ENCODE measurements at regions of chr1 and their contacts with region 1.

Region 1: GRCh38 chr1:155834296-155834926 is 22.6 kb downstream of the GON4L start:
- DNase-seq: peak in 1 of 9 donors; percentile 11
- ATAC-seq: no peak
- H3K4me3 ChIP-seq: no peak overlapping the region
- H3K4me3 Mint-ChIP-seq: no peak overlapping the region
- H3K27ac ChIP-seq: no peak overlapping the region
- H3K27ac Mint-ChIP-seq: peak overlapping the region in 7 of 9 donors; percentile 25 to 84 (median 67)
- H3K4me1 ChIP-seq: no peaks in the 10 kb centered on the region
- H3K4me1 Mint-ChIP-seq: peaks cover 26 to 40% (median 35%) of the 10 kb centered on the region in 7 donors
- H3K27me3 ChIP-seq: no peaks in the 10 kb centered on the region
- H3K27me3 Mint-ChIP-seq: no peaks in the 10 kb centered on the region

Region 2: GRCh38 chr1:155424091-155424490 is 410.3 kb before region 1 on chr1:
- CTCF ChIA-PET with region 1: no interaction called
- POLR2A ChIA-PET with region 1: no interaction called
- intact Hi-C with region 1: no loop called
- DNase-seq: no peak
- ATAC-seq: no peak
- H3K4me3 ChIP-seq: no peak overlapping the region
- H3K4me3 Mint-ChIP-seq: no peak overlapping the region
- H3K27ac ChIP-seq: no peak overlapping the region
- H3K27ac Mint-ChIP-seq: peak overlapping the region in 1 of 9 donors; percentile 36
- H3K4me1 ChIP-seq: no peaks in the 10 kb centered on the region
- H3K4me1 Mint-ChIP-seq: peaks cover 0 to 7% (median 5%) of the 10 kb centered on the region in 7 donors
- H3K27me3 ChIP-seq: no peaks in the 10 kb centered on the region
- H3K27me3 Mint-ChIP-seq: no peaks in the 10 kb centered on the region

Region 3: DNA sequence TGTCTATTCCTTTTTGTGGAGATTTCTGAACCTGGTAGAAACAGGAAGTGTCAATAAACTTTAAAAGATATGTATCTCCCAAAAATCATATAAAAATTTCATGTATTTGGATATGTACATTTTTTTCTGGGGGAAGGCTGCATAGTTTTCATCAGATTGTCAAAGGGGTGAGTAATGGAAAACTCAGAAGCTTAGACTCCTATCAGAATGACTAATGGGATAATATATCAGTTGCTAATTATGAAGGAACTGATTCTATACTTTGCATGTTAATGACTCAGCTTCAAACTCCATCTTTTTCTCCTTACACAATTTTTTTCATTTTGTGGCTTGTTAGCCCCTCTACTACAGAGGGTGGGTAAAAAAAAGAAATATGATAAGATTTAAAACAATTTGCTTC is 33.3 kb before region 1 on chr1:
- CTCF ChIA-PET with region 1: no interaction called
- POLR2A ChIA-PET with region 1: no interaction called
- intact Hi-C with region 1: no loop called
- DNase-seq: no peak
- ATAC-seq: no peak
- H3K4me3 ChIP-seq: no peak overlapping the region
- H3K4me3 Mint-ChIP-seq: no peak overlapping the region
- H3K27ac ChIP-seq: no peak overlapping the region
- H3K27ac Mint-ChIP-seq: peak overlapping the region in 1 of 9 donors; percentile 38
- H3K4me1 ChIP-seq: no peaks in the 10 kb centered on the region
- H3K4me1 Mint-ChIP-seq: peaks cover 0 to 3% (median 0%) of the 10 kb centered on the region in 7 donors
- H3K27me3 ChIP-seq: no peaks in the 10 kb centered on the region
- H3K27me3 Mint-ChIP-seq: no peaks in the 10 kb centered on the region

Region 4: DNA sequence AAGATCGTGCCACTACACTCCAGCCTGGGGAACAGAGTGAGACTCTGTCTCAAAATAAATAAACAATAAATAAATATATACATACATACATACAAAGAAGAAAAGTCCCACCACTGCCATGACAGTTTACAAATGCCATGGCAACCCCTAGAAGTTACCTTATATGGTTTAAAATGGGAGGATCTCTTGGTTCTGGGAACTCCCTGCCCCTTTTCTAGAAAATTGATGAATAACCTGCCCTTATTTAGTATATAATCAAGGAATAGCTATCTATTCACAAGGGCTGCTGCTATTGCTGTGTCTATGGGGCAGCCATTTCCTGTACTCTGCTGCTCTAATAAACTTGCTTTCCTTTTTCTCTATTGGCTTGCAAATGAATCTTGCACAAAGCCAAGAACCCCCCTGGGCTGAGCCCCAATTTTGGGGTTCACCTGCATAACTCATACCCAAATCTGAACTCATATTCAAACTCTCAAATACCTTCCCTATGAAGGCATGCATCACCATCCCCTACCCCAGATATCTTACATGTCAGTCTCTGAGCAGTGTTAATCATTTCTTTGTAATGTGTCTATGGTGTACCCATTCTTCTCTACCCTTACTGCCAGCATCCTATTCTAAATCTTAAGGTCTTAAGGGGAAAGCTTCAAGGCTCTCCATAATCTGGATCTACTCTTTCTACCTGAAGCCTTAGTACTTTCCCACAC is 13.6 kb after region 1 on chr1:
- CTCF ChIA-PET with region 1: interaction called, 3 read pairs
- POLR2A ChIA-PET with region 1: interaction called, 3 read pairs
- intact Hi-C with region 1: loop called in 1 of 2 experiments (anchors 1 kb)
- DNase-seq: no peak
- ATAC-seq: no peak
- H3K4me3 ChIP-seq: no peak overlapping the region
- H3K4me3 Mint-ChIP-seq: peak overlapping the region; percentile 6 to 66 (median 41)
- H3K27ac ChIP-seq: no peak overlapping the region
- H3K27ac Mint-ChIP-seq: peak overlapping the region in 8 of 9 donors; percentile 0 to 85 (median 48)
- H3K4me1 ChIP-seq: peaks cover 14 to 18% of the 10 kb centered on the region in 2 donors
- H3K4me1 Mint-ChIP-seq: peaks cover 44 to 79% (median 61%) of the 10 kb centered on the region in 7 donors
- H3K27me3 ChIP-seq: no peaks in the 10 kb centered on the region
- H3K27me3 Mint-ChIP-seq: no peaks in the 10 kb centered on the region